ENCODE measurements at regions of chr11 and their contacts with region 1.

Region 1: GRCh38 chr11:97645736-97646135 is 1255.9 kb downstream of the JRKL start:
- DNase-seq: no peak
- H3K4me3 ChIP-seq: no peak overlapping the region
- H3K27ac ChIP-seq: no peak overlapping the region
- H3K4me1 ChIP-seq: no peaks in the 10 kb centered on the region
- H3K27me3 ChIP-seq: no peaks in the 10 kb centered on the region
- CTCF ChIP-seq: no peak

Region 2: DNA sequence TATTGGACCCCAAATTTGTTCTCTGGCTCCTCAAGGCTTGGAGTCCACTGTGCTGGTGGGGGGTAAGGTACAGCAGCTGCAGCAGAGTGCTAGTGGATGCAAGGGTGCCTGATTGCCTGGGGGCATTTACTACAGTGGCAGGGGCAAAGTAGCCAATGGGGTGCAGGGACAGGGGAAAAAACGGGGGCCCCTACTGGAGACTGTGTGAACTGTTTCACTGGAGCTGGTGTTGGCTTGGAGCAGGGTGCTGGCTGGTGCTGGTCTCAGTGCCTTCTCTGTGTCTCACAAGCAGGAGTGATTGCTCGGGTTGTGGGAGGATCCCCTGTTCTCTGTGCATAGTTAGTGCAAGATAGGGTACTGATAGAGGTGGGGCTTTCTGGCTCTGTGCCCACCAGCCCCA is 320.0 kb before region 1 on chr11:
- CTCF ChIA-PET with region 1: no interaction called
- POLR2A ChIA-PET with region 1: no interaction called
- intact Hi-C with region 1: no loop called
- DNase-seq: no peak
- H3K4me3 ChIP-seq: no peak overlapping the region
- H3K27ac ChIP-seq: no peak overlapping the region
- H3K4me1 ChIP-seq: no peaks in the 10 kb centered on the region
- H3K27me3 ChIP-seq: no peaks in the 10 kb centered on the region
- CTCF ChIP-seq: no peak

Region 3: DNA sequence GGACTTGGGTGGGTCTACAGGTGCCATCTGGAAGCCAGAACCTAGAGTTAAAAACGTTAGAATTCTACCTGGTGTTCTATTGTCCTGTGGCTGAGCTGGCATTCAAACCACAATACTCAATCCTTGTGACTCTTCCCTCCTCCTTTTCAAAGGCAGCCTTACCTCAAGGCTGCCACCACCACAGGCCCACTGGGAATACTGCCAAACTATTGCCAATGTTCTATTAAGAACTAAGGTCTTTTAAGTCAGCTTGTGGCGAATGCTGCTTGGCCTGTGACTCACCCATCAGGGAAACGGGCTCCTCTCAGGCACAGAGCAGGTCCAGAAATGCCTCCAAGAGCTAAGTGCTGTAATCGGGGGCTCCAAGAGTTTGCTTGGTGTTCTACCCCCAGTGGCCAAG is 247.5 kb before region 1 on chr11:
- CTCF ChIA-PET with region 1: no interaction called
- POLR2A ChIA-PET with region 1: no interaction called
- intact Hi-C with region 1: no loop called
- DNase-seq: no peak
- H3K4me3 ChIP-seq: no peak overlapping the region
- H3K27ac ChIP-seq: no peak overlapping the region
- H3K4me1 ChIP-seq: no peaks in the 10 kb centered on the region
- H3K27me3 ChIP-seq: no peaks in the 10 kb centered on the region
- CTCF ChIP-seq: no peak

Region 4: DNA sequence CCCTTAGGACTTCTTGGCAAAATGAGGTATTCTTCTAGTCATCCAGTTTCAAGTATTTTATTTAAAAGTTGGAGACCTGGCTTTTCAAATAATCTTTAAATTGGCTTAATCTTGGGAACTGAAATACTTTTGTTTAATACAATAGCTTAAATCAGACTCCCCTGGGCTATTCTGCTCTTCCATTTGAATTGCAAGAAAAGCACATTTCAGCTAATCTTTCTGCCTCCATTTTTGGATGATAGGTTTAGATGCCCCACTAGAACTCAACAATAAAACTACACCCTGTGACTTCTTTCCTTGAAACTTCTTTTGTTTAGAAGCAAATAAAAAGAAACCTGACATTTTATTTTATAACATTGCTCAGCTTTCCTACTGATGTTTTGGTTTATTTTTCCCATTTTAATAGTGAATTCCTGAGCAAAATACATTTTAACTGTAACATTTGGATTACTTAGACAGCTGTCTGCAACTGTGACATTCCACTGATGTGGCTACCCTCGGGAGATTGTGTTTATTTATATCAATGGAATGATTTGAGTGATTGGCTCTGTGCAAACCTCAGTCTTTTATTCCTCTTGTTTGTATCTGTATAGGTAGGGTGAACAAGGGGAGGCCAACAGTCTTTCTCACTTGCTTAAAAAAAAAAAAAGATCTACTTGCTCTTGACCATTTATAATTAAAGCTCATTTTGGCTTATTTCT is 329.2 kb after region 1 on chr11:
- CTCF ChIA-PET with region 1: no interaction called
- POLR2A ChIA-PET with region 1: interaction called, 10 read pairs
- intact Hi-C with region 1: no loop called
- DNase-seq: no peak
- H3K4me3 ChIP-seq: no peak overlapping the region
- H3K27ac ChIP-seq: no peak overlapping the region
- H3K4me1 ChIP-seq: no peaks in the 10 kb centered on the region
- H3K27me3 ChIP-seq: no peaks in the 10 kb centered on the region
- CTCF ChIP-seq: no peak